ENCODE measurements at regions of chr2 and their contacts with region 1.

Region 1: DNA sequence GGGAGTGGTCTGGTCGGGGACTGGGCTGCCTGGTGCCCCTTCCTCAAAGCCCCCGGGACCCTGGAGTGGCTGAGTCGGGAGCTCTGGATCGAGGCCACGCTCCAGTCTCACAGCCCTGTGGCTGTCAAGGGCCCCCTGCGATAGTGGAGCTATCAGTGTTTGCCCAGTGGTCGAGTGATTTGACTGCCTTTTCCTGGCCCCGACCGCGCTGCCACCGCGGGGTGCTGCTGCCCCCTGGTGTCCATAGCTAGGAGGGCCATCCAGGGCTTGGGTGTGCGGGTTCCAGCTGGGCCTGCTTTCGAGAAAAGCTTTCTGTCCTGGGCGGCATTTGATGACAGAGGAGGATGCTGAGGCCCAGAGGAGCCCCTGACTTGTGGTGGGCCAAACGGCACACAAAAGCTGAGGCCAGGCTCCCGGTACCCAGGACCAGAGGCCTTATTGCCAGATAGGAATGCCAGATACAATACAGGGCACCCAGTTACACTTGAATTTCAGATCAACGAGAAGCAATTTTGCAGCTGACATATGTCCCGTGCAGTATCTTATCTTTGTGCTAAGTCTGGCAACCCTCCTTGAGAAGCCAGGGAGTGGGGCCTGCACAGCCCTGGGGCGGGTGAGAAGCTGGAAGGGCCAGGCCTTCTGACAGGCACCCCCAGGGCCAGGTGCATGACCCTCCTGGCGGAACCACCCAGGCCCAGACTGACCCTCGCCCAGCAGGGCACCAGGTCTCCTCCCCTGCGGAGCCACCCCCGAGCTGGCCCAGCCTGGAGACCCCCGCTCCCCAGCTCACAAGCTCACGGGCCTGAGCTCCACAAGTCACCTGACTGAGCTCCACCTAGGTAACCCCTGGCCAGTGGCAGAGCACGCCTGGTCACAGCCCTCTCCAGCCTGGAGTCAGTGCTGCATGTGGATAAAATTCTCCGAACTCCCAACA is 13.0 kb downstream of the ODC1 start:
- DNase-seq: peak; percentile 80
- H3K4me3 Mint-ChIP-seq: no peak overlapping the region
- H3K27ac Mint-ChIP-seq: no peak overlapping the region
- H3K4me1 Mint-ChIP-seq: peaks cover 12% of the 10 kb centered on the region
- H3K27me3 Mint-ChIP-seq: peaks cover 13% of the 10 kb centered on the region

Region 2: DNA sequence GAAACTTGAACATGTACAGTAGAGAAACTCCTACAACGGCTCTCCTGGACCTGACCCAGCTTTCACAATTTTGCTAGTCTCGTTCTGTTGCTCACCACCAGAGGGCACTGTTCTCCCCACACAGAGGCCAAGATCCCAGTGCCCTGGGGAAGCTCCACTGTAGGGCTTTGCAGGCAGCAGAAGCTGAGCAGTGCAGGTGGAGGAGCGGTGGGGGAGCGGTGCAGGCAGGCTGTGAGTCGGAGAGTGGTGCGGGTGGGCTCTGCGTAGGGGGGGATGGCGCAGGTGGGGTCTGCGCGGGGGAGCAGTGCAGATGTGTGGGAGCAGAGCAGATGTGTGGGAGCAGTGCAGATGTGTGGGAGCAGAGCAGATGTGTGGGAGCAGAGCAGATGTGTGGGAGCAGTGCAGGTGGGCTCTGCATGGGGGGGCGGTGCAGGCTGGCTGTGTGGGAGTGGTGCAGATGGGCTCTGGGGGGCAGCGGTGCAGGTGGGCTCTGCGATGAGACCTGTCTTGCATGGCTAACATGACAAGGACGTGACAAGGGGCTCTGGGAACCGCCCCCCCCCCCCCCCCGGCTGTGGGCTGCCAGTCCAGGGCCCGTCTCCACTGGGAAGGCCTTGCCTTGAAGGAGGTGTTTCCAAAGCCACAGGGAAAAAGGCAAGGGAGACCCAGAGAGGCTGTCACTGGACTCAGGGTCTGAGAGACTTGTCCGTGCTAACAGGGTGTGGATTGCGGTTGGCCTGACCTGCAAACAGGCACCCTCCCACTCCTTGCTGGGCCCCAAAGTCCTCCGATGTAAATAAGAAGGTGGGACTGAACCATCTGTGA is 362.3 kb before region 1 on chr2:
- CTCF ChIA-PET with region 1: interaction called, 214 read pairs
- POLR2A ChIA-PET with region 1: interaction called, 6 read pairs
- intact Hi-C with region 1: loop called (anchors 1 kb)
- DNase-seq: peak; percentile 86
- H3K4me3 Mint-ChIP-seq: no peak overlapping the region
- H3K27ac Mint-ChIP-seq: no peak overlapping the region
- H3K4me1 Mint-ChIP-seq: peaks cover 4% of the 10 kb centered on the region
- H3K27me3 Mint-ChIP-seq: peaks cover 37% of the 10 kb centered on the region

Region 3: DNA sequence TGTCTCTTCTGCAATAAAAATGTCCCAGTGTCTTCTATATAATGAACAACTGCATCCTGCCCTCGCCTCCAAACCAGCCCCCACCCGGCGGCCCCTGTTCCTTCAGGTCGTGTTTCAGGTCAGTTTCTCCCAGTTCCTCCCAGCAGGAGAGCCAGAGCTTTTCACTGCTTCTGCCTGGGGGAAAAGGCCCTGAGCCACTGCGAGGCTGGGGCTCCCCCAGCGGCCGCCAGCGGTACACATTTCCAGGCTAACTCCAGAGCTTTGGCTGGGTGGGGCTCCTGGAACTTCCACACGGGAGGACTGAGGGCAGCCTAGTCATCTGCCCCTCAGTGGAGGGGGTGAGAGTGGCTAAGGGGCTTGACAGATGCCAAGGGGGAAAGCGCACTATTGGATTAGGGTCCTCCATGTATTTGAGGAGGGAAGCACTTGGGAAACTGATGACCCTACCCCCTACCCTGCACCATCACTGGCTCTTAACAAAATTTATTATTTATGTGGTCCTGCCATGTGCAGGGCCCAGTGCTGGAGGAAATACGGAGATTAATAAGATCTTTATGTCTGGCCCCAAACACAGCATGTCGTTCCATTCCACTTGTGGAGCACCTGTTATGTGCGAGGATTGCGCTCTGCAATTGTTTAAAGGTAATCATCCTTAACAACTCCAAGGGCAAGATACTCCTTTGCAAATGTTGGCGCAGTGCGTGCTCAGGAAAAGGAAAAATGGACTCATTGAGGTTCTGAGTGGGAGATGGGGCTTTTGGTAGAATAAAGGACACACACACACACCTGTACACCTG is 337.6 kb before region 1 on chr2:
- CTCF ChIA-PET with region 1: interaction called, 13 read pairs
- POLR2A ChIA-PET with region 1: no interaction called
- intact Hi-C with region 1: no loop called
- DNase-seq: peak; percentile 50
- H3K4me3 Mint-ChIP-seq: no peak overlapping the region
- H3K27ac Mint-ChIP-seq: no peak overlapping the region
- H3K4me1 Mint-ChIP-seq: no peaks in the 10 kb centered on the region
- H3K27me3 Mint-ChIP-seq: peaks cover 21% of the 10 kb centered on the region

Region 4: DNA sequence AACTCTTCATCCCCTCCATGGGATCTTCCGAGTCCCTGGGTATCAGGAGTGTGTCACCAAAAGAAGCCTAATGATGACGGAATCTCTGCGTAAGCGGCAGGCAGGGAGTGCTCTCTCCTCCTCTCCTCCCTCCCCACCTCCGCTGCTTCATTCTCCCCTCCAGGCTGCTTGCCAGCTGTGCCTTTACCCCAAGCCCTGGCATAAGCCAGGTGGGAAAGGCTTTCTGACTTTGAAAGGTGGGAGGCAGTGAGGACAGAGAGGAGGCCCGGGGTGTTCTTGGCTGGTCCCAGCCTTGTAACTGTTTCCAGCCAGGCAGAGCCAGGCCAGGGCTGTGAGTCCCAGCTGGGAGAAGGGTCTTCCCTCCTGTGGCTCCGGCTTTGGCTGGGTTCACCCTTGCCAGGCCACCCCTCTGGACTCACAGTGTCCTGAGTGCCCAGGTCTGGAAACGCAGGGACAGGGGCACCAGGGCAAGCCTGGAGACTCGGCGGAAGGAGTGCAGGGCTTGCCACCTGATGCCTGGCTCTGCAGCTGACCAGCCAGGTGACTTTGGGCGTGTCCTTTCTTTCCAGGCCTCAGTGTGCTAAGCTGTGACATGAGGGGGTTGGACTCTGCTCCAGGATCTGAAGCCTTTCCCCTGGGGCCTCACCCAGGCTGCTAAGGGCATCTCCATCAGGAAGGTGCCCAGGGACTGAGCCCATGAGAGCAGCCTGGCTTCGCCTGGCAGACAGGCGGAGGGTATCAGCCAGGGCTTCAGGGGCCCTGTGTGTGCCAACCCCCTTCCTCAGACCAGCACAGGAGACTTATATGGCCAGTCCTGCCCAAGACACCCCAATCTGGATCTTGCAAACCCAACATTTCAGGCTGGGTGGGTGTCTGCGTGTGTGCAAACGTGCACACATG is 165.2 kb before region 1 on chr2:
- CTCF ChIA-PET with region 1: interaction called, 6 read pairs
- POLR2A ChIA-PET with region 1: no interaction called
- intact Hi-C with region 1: loop called (anchors 1 kb)
- DNase-seq: no peak
- H3K4me3 Mint-ChIP-seq: no peak overlapping the region
- H3K27ac Mint-ChIP-seq: no peak overlapping the region
- H3K4me1 Mint-ChIP-seq: peaks cover 10% of the 10 kb centered on the region
- H3K27me3 Mint-ChIP-seq: no peaks in the 10 kb centered on the region

Region 5: GRCh38 chr2:10331027-10331701 is 104.0 kb before region 1 on chr2:
- CTCF ChIA-PET with region 1: interaction called, 10 read pairs
- POLR2A ChIA-PET with region 1: no interaction called
- intact Hi-C with region 1: no loop called
- DNase-seq: peak; percentile 91
- H3K4me3 Mint-ChIP-seq: peak overlapping the region; percentile 86
- H3K27ac Mint-ChIP-seq: peak overlapping the region; percentile 90
- H3K4me1 Mint-ChIP-seq: peaks cover 76% of the 10 kb centered on the region
- H3K27me3 Mint-ChIP-seq: no peaks in the 10 kb centered on the region

Region 6: GRCh38 chr2:10954876-10955754 is 520.0 kb after region 1 on chr2:
- CTCF ChIA-PET with region 1: no interaction called
- POLR2A ChIA-PET with region 1: no interaction called
- intact Hi-C with region 1: no loop called
- DNase-seq: no peak
- H3K4me3 Mint-ChIP-seq: no peak overlapping the region
- H3K27ac Mint-ChIP-seq: no peak overlapping the region
- H3K4me1 Mint-ChIP-seq: peaks cover 10% of the 10 kb centered on the region
- H3K27me3 Mint-ChIP-seq: peaks cover 12% of the 10 kb centered on the region

Measured in activated CD4-positive, alpha-beta memory T cell treated with anti-CD3 and anti-CD28 coated beads for 36 hours (primary cell).